ENCODE measurements at regions of chr6 and their contacts with region 1.

Region 1: DNA sequence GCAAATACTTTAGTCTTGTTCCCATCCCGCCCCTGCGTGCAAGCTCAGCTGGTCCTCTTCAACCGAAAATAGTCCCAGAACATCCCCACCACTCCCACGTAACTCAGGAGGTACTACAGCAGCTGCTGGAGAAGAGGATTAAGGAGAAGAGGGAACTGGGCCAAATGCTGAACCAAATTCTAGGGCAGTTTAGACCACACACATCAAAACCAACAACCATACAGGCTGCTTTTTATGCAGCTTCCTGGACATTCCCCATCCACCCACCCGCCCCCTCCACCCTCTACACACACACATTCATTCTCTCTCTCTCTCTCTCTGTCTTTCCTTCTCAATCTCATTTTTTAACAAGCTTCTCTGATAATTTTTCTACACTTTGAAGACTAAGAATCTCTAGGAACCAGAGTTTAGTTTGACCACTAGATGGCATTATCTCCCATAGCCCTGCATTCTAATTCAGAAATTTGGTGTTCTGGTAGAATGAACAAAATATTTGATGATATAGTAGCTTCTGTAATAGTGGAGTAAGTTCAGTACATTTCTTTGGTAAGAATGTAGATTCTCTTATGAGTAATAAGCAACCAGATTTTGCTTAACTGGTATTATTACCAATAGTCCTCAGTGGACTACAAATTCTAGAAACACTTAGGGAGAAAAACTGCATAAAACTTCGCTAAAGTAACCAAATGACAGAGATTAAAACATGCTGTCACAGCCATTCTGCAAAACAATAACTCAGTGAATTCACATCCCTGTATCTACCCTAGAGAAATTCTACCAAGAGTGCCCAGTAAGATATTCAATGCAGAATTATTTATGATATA is 52.1 kb upstream of the BEND6 start:
- DNase-seq: peak in 1 of 2 donors; percentile 9
- ATAC-seq: peak in 6 of 8 donors; percentile 42 to 74 (median 56)
- H3K4me3 ChIP-seq: peak overlapping the region in 1 of 10 donors; percentile 8
- H3K27ac ChIP-seq: no peak overlapping the region
- H3K4me1 ChIP-seq: peaks cover 0 to 5% (median 0%) of the 10 kb centered on the region in 9 donors
- H3K27me3 ChIP-seq: no peaks in the 10 kb centered on the region
- CTCF ChIP-seq: peak; percentile 53 to 84 (median 74)

Region 2: GRCh38 chr6:56955171-56956045 is 52.6 kb after region 1 on chr6:
- intact Hi-C with region 1: loop called in 3 of 10 experiments (anchors 5 to 10 kb)
- DNase-seq: peak; percentile 76 to 81
- ATAC-seq: peak; percentile 43 to 92 (median 84)
- H3K4me3 ChIP-seq: peak overlapping the region; percentile 15 to 65 (median 58)
- H3K27ac ChIP-seq: peak overlapping the region in 2 of 10 donors; percentile 10 to 17
- H3K4me1 ChIP-seq: peaks cover 0 to 27% (median 17%) of the 10 kb centered on the region in 9 donors
- H3K27me3 ChIP-seq: peaks cover 0 to 48% (median 15%) of the 10 kb centered on the region in 7 donors
- CTCF ChIP-seq: peak; percentile 26 to 80 (median 65)

Region 3: DNA sequence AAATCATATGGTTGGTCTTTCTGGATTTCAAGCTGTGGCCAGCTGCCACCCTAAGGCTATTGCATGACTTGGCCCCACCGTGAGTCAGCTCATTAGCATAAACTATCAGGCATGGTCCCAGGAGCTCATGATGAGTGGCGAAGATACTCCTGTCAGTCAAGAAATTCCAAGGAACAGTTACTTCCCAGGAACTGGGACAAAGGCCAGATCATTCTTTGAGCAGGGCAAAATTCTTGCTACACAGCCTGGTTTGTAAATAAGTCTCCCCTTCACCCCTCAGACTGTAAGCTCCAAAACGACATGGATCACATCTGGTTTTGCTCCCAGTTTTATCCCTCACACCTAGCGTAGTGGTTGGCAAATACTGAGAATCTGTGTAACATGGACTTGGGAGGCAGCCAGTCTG is 110.7 kb after region 1 on chr6:
- intact Hi-C with region 1: loop called in 1 of 10 experiments (anchors 5 kb)
- DNase-seq: no peak
- ATAC-seq: no peak
- H3K4me3 ChIP-seq: no peak overlapping the region
- H3K27ac ChIP-seq: no peak overlapping the region
- H3K4me1 ChIP-seq: no peaks in the 10 kb centered on the region
- H3K27me3 ChIP-seq: no peaks in the 10 kb centered on the region
- CTCF ChIP-seq: no peak

Region 4: DNA sequence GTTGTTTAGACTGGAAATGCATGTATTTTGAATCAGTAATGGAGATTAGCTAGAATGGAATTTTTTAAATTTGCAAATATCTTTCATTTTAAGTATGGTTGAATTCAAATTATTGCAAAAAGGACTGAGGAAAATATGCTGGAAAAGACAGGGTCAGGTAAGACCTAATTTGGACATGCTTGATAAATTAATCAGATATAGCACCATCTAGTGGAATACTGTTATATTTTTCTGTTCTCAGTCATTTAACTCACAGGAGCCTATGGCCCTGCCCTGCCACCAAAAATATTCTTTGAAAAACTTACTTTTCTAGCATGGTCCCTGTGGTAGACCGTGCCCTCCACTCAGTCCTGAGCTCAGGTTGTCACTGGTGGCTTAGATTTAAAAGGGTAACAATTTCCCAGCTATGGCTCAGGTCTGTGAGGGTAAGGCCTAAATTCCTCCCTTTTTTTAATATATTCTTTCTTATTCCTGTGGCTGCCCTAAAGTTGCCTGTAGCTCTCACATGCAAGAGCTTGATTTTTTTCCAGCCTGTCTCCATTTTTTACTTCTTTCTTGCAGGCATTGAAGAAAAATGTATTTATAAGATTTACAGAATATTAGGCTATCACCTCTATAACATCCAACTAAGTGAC is 118.3 kb after region 1 on chr6:
- intact Hi-C with region 1: loop called in 9 of 10 experiments (anchors 5 kb)
- DNase-seq: no peak
- ATAC-seq: no peak
- H3K4me3 ChIP-seq: no peak overlapping the region
- H3K27ac ChIP-seq: no peak overlapping the region
- H3K4me1 ChIP-seq: no peaks in the 10 kb centered on the region
- H3K27me3 ChIP-seq: no peaks in the 10 kb centered on the region
- CTCF ChIP-seq: peak; percentile 22 to 70 (median 63)

Region 5: DNA sequence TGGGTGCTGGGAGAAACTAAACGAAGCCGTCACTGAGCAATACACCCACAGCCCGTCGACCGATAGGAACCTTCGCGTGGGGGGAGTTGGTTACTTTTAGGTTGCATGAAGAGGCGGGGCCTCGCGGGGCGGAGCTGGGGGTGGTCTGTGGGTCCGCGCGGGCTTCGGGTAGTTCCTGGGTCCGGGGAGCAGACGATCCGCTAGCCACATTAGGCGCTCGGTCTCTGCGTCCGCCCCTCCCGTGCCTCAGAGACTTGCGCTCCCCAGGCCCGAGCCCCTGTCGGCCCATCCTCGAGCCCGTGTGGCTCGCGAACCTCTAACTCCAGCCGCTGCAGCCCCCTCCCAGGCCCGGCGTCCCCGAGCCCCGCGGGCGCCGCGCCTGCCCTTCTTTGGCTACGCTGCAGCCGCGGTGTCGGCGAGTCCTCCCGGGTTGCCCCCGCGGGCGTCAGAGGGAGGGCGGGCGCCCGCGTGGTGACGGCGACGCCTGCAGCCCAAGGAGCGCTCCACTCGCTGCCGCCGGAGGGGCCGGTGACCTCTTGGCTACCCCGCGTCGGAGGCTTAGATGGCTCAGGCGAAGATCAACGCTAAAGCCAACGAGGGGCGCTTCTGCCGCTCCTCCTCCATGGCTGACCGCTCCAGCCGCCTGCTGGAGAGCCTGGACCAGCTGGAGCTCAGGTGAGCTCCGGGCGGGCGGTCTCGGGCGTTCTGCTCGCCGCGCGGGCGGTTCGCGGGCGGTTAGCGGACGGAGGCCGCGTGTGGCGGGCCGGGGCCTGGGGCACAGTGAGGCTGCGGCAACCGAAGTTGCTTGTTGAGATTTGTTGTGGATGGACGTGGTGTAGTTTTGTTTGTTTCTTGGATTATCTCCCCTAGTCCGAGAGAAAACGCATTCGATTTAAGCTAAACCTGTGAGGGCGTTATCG is 269.5 kb after region 1 on chr6 and contains the start of gene BAG2:
- intact Hi-C with region 1: loop called in 1 of 10 experiments (anchors 10 kb)
- DNase-seq: peak; percentile 85 to 87
- ATAC-seq: peak; percentile 94 to 98 (median 95)
- H3K4me3 ChIP-seq: peak within 1 kb of the TSS; percentile 57 to 80 (median 76)
- H3K27ac ChIP-seq: peak within 1 kb of the TSS; percentile 88 to 98 (median 91)
- H3K4me1 ChIP-seq: peaks cover 0 to 39% (median 19%) of the 10 kb centered on the region in 9 donors
- H3K27me3 ChIP-seq: no peaks in the 10 kb centered on the region
- CTCF ChIP-seq: peak in 5 of 9 donors; percentile 7 to 46 (median 27)
- total RNA-seq, gene BAG2: 7.2 to 15.6 (median 9.7) TPM

Region 6: GRCh38 chr6:57324538-57324937 is 421.7 kb after region 1 on chr6:
- intact Hi-C with region 1: loop called in 5 of 10 experiments (anchors 2 to 5 kb)
- DNase-seq: no peak
- ATAC-seq: no peak
- H3K4me3 ChIP-seq: no peak overlapping the region
- H3K27ac ChIP-seq: no peak overlapping the region
- H3K4me1 ChIP-seq: no peaks in the 10 kb centered on the region
- H3K27me3 ChIP-seq: no peaks in the 10 kb centered on the region
- CTCF ChIP-seq: peak in 8 of 9 donors; percentile 20 to 61 (median 56)